ENCODE measurements at regions of chr9 and their contacts with region 1.

Region 1: GRCh38 chr9:19127881-19128500 is 699 bp upstream of the PLIN2 start:
- DNase-seq: peak; percentile 2 to 60 (median 32)
- ATAC-seq: peak; percentile 25
- H3K4me3 ChIP-seq: peak overlapping the region; percentile 90
- H3K4me3 Mint-ChIP-seq: peak overlapping the region; percentile 94
- H3K27ac ChIP-seq: peak overlapping the region; percentile 90 to 92
- H3K27ac Mint-ChIP-seq: peak overlapping the region; percentile 95
- H3K4me1 ChIP-seq: peaks cover 59% of the 10 kb centered on the region
- H3K4me1 Mint-ChIP-seq: peaks cover 64% of the 10 kb centered on the region
- H3K27me3 ChIP-seq: no peaks in the 10 kb centered on the region
- H3K27me3 Mint-ChIP-seq: no peaks in the 10 kb centered on the region
- CTCF ChIP-seq: no peak

Region 2: GRCh38 chr9:18666986-18667772 is 460.8 kb before region 1 on chr9:
- CTCF ChIA-PET with region 1: no interaction called
- POLR2A ChIA-PET with region 1: no interaction called
- intact Hi-C with region 1: no loop called
- DNase-seq: no peak
- ATAC-seq: no peak
- H3K4me3 ChIP-seq: no peak overlapping the region
- H3K4me3 Mint-ChIP-seq: no peak overlapping the region
- H3K27ac ChIP-seq: no peak overlapping the region
- H3K27ac Mint-ChIP-seq: no peak overlapping the region
- H3K4me1 ChIP-seq: no peaks in the 10 kb centered on the region
- H3K4me1 Mint-ChIP-seq: no peaks in the 10 kb centered on the region
- H3K27me3 ChIP-seq: no peaks in the 10 kb centered on the region
- H3K27me3 Mint-ChIP-seq: peaks cover 21% of the 10 kb centered on the region
- CTCF ChIP-seq: no peak

Region 3: GRCh38 chr9:19156026-19156474 is 28.1 kb after region 1 on chr9:
- CTCF ChIA-PET with region 1: interaction called, 4 read pairs
- POLR2A ChIA-PET with region 1: interaction called, 3 read pairs
- intact Hi-C with region 1: loop called in 1 of 2 experiments (anchors 2 kb)
- DNase-seq: peak in 1 of 14 experiments; percentile 11
- ATAC-seq: no peak
- H3K4me3 ChIP-seq: no peak overlapping the region
- H3K4me3 Mint-ChIP-seq: no peak overlapping the region
- H3K27ac ChIP-seq: no peak overlapping the region
- H3K27ac Mint-ChIP-seq: no peak overlapping the region
- H3K4me1 ChIP-seq: peaks cover 14% of the 10 kb centered on the region
- H3K4me1 Mint-ChIP-seq: peaks cover 16% of the 10 kb centered on the region
- H3K27me3 ChIP-seq: no peaks in the 10 kb centered on the region
- H3K27me3 Mint-ChIP-seq: no peaks in the 10 kb centered on the region
- CTCF ChIP-seq: no peak

Measured in CD4-positive, alpha-beta T cell (primary cell).